Calu3 (cell line): ENCODE measurements at regions of chr7 and their contacts with region 1.

Region 1: DNA sequence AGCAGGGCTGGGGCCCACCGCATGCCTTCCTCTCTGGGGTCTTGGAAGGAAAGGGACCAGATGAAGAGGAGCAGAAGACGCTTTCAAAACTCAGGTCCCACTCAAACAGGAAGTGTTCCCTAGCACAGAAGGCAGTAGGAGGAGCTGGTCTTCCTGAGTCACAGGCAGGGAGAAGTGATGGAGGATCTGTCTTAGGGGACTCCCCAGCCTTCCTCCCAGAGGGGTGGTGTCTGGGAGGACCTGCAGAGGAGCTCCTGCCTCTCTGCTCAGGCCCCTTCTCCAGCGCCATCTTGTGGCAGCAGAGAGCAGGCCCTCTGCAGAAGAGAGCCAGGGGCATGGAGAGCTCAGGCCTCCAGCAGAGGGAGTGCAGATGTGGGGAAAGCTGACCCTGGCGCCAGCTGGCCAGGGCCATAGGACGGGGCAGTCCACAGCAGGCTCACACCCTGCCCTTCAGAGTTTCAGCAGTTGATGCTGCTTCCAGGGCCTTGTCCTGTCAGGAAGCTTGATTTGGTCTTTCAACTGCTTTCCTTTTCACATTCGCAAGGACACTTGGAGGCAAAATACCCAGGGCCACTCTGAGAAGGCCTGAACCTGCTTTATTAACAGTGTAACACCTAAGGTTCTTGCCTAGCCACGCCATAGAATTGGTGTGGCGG is 62.2 kb upstream of the TARP start:
- DNase-seq: peak; percentile 93
- H3K4me3 Mint-ChIP-seq: no peak overlapping the region
- H3K27ac Mint-ChIP-seq: no peak overlapping the region
- H3K4me1 Mint-ChIP-seq: peaks cover 9% of the 10 kb centered on the region
- H3K27me3 Mint-ChIP-seq: no peaks in the 10 kb centered on the region
- CTCF ChIP-seq: peak; percentile 98

Region 2: GRCh38 chr7:38122501-38122900 is 213.1 kb before region 1 on chr7:
- CTCF ChIA-PET with region 1: interaction called, 10 read pairs
- intact Hi-C with region 1: no loop called
- DNase-seq: no peak
- H3K4me3 Mint-ChIP-seq: no peak overlapping the region
- H3K27ac Mint-ChIP-seq: no peak overlapping the region
- H3K4me1 Mint-ChIP-seq: no peaks in the 10 kb centered on the region
- H3K27me3 Mint-ChIP-seq: peaks cover 15% of the 10 kb centered on the region
- CTCF ChIP-seq: no peak

Region 3: DNA sequence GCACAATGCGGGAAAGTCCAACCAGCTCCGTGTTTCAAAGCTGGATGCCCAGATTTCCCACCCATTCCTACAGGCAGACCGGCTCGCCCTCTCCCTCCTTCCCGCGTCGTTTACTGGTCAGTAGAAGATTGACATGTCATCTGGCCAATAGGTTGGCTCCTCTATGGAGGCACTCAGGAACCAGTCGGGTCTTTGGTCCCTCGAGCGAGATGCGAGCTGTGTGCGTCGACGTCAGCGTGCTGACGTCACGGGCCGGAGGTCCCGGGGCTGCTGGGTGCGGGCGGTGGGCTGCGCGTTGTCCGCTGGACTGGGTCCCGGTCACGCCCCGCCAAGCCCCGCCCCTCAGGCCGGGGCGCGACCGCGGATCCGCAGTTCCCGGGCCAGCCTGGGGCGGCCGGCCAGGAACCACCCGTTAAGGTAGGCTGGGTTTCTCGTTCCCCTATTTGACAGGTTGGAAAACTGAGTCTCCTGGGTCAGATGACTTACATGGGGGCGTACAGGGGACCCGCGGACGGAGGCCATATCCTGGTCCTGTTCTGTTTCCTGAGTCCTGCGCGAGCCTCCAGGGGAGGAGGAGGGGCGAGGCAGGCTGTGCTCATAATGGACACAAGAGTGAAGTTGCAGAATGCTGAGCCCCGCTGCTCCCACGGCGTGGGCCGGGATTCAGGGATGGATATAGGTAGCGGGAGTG is 157.5 kb before region 1 on chr7 and contains the start of gene STARD3NL:
- CTCF ChIA-PET with region 1: no interaction called
- intact Hi-C with region 1: loop called (anchors 5 kb)
- DNase-seq: peak; percentile 99
- H3K4me3 Mint-ChIP-seq: peak within 1 kb of the TSS; percentile 95
- H3K27ac Mint-ChIP-seq: peak within 1 kb of the TSS; percentile 90
- H3K4me1 Mint-ChIP-seq: peaks cover 17% of the 10 kb centered on the region
- H3K27me3 Mint-ChIP-seq: no peaks in the 10 kb centered on the region
- CTCF ChIP-seq: no peak
- total RNA-seq, gene STARD3NL: 60.7 and 66.4 TPM in 2 replicates

Region 4: GRCh38 chr7:38506756-38507155 is 171.1 kb after region 1 on chr7:
- CTCF ChIA-PET with region 1: no interaction called
- intact Hi-C with region 1: no loop called
- DNase-seq: no peak
- H3K4me3 Mint-ChIP-seq: no peak overlapping the region
- H3K27ac Mint-ChIP-seq: no peak overlapping the region
- H3K4me1 Mint-ChIP-seq: no peaks in the 10 kb centered on the region
- H3K27me3 Mint-ChIP-seq: peaks cover 89% of the 10 kb centered on the region
- CTCF ChIP-seq: no peak